Mammary epithelial cell (primary cell): ENCODE measurements at regions of chr15 and their contacts with region 1.

Region 1: GRCh38 chr15:57213862-57214261 is 162.4 kb upstream of the CGNL1 start:
- DNase-seq: peak; percentile 24
- H3K4me3 ChIP-seq: no peak overlapping the region
- H3K27ac ChIP-seq: no peak overlapping the region
- H3K4me1 ChIP-seq: peaks cover 21% of the 10 kb centered on the region
- H3K27me3 ChIP-seq: no peaks in the 10 kb centered on the region
- CTCF ChIP-seq: peak; percentile 34 to 59

Region 2: GRCh38 chr15:56918046-56918938 is 295.6 kb before region 1 on chr15 and contains the start of gene TCF12:
- CTCF ChIA-PET with region 1: no interaction called
- dilution Hi-C with region 1: no loop called
- in situ Hi-C with region 1: no loop called
- intact Hi-C with region 1: loop called (anchors 2 kb)
- DNase-seq: peak; percentile 95
- H3K4me3 ChIP-seq: peak within 1 kb of the TSS; percentile 90 to 98 (median 97)
- H3K27ac ChIP-seq: peak within 1 kb of the TSS; percentile 84
- H3K4me1 ChIP-seq: peaks cover 8% of the 10 kb centered on the region
- H3K27me3 ChIP-seq: no peaks in the 10 kb centered on the region
- CTCF ChIP-seq: peak in 1 of 2 donors; percentile 66
- total RNA-seq, gene TCF12: 91.7 to 110 TPM

Region 3: GRCh38 chr15:57118013-57118799 is 95.7 kb before region 1 on chr15:
- CTCF ChIA-PET with region 1: interaction called, 18 read pairs
- dilution Hi-C with region 1: no loop called
- in situ Hi-C with region 1: no loop called
- intact Hi-C with region 1: no loop called
- DNase-seq: peak; percentile 29
- H3K4me3 ChIP-seq: no peak overlapping the region
- H3K27ac ChIP-seq: no peak overlapping the region
- H3K4me1 ChIP-seq: peaks cover 8% of the 10 kb centered on the region
- H3K27me3 ChIP-seq: no peaks in the 10 kb centered on the region
- CTCF ChIP-seq: no peak

Region 4: GRCh38 chr15:57306161-57306943 is 92.5 kb after region 1 on chr15:
- CTCF ChIA-PET with region 1: no interaction called
- dilution Hi-C with region 1: no loop called
- in situ Hi-C with region 1: no loop called
- intact Hi-C with region 1: loop called (anchors 5 kb)
- DNase-seq: peak; percentile 42
- H3K4me3 ChIP-seq: peak overlapping the region; percentile 39 to 53 (median 46)
- H3K27ac ChIP-seq: no peak overlapping the region
- H3K4me1 ChIP-seq: peaks cover 12% of the 10 kb centered on the region
- H3K27me3 ChIP-seq: no peaks in the 10 kb centered on the region
- CTCF ChIP-seq: peak; percentile 55 to 91

Region 5: GRCh38 chr15:57667171-57667849 is 453.4 kb after region 1 on chr15:
- CTCF ChIA-PET with region 1: no interaction called
- dilution Hi-C with region 1: no loop called
- in situ Hi-C with region 1: no loop called
- intact Hi-C with region 1: no loop called
- DNase-seq: peak; percentile 50
- H3K4me3 ChIP-seq: no peak overlapping the region
- H3K27ac ChIP-seq: peak overlapping the region; percentile 6
- H3K4me1 ChIP-seq: peaks cover 18% of the 10 kb centered on the region
- H3K27me3 ChIP-seq: no peaks in the 10 kb centered on the region
- CTCF ChIP-seq: peak; percentile 47 to 64